Colonic mucosa (tissue), 4 donors: ENCODE measurements at regions of chr17 and their contacts with region 1.

Region 1: DNA sequence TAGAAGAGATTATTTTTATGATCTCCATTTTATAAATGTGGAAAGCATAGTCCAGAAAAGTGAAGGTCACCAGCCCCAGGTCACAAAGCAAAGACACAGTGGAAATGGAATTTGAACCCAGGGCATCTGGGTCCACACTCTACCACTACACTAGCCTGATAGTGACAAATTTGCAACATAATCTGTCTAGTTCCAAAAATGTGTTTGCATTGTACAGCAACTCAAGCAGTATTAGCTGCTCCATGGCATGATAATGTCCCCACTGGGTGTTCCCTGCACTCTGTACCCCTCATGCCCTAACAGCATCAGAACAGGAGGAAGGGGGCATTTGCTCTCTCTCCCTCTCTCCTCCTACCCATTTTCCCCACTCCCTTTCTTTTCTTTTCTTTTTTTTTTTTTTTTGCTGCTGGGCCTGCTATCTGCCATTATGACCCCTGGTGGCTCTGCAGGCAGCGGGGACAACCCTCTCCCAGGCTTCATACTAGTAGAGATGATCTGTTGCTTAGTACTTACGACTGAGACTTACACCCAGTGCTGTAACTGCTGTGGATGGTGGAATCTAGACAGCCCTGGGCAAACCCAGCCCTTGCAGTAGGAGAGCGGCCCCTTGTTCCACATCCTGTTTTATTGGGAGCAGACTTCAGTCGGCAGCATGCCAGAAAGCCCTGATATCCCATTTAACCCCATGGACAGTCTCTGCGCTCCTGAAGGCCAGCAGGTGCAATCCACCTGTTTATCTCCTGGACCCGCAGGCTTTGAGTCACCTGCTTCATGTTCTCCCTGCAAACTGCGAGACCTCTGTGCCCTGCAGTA is 306.3 kb downstream of the SOX9 start:
- DNase-seq: peak; percentile 89
- H3K4me3 ChIP-seq: no peak overlapping the region
- H3K27ac ChIP-seq: peak overlapping the region; percentile 74
- H3K4me1 ChIP-seq: peaks cover 22% of the 10 kb centered on the region
- H3K27me3 ChIP-seq: no peaks in the 10 kb centered on the region
- CTCF ChIP-seq: no peak

Region 2: GRCh38 chr17:72158895-72159885 is 268.0 kb before region 1 on chr17:
- intact Hi-C with region 1: no loop called
- DNase-seq: no peak
- H3K4me3 ChIP-seq: no peak overlapping the region
- H3K27ac ChIP-seq: no peak overlapping the region
- H3K4me1 ChIP-seq: no peaks in the 10 kb centered on the region
- H3K27me3 ChIP-seq: no peaks in the 10 kb centered on the region
- CTCF ChIP-seq: no peak

Region 3: GRCh38 chr17:72255481-72255880 is 171.7 kb before region 1 on chr17:
- intact Hi-C with region 1: loop called (anchors 5 kb)
- DNase-seq: peak; percentile 30
- H3K4me3 ChIP-seq: no peak overlapping the region
- H3K27ac ChIP-seq: peak overlapping the region; percentile 13
- H3K4me1 ChIP-seq: peaks cover 4% of the 10 kb centered on the region
- H3K27me3 ChIP-seq: no peaks in the 10 kb centered on the region
- CTCF ChIP-seq: no peak

Region 4: GRCh38 chr17:72479113-72479512 is 52.0 kb after region 1 on chr17:
- intact Hi-C with region 1: no loop called
- DNase-seq: no peak
- H3K4me3 ChIP-seq: no peak overlapping the region
- H3K27ac ChIP-seq: peak overlapping the region; percentile 4
- H3K4me1 ChIP-seq: no peaks in the 10 kb centered on the region
- H3K27me3 ChIP-seq: no peaks in the 10 kb centered on the region
- CTCF ChIP-seq: peak; percentile 21